Thyroid gland (tissue), 4 donors: ENCODE measurements at regions of chr9 and their contacts with region 1.

Region 1: GRCh38 chr9:105069696-105070095 is 141.7 kb upstream of the ABCA1 start:
- DNase-seq: no peak
- H3K4me3 ChIP-seq: no peak overlapping the region
- H3K27ac ChIP-seq: no peak overlapping the region
- H3K4me1 ChIP-seq: peaks cover 6 to 15% of the 10 kb centered on the region in 2 donors
- H3K27me3 ChIP-seq: no peaks in the 10 kb centered on the region
- CTCF ChIP-seq: no peak
- POLR2A ChIP-seq: no peak

Region 2: GRCh38 chr9:105141146-105141975 is 71.7 kb after region 1 on chr9:
- intact Hi-C with region 1: loop called (anchors 10 kb)
- DNase-seq: no peak
- H3K4me3 ChIP-seq: no peak overlapping the region
- H3K27ac ChIP-seq: no peak overlapping the region
- H3K4me1 ChIP-seq: no peaks in the 10 kb centered on the region
- H3K27me3 ChIP-seq: no peaks in the 10 kb centered on the region
- CTCF ChIP-seq: no peak
- POLR2A ChIP-seq: no peak